HepG2 (cell line): ENCODE measurements at regions of chr17 and their contacts with region 1.

Region 1: GRCh38 chr17:43006639-43007551 is at the start of gene IFI35:
- DNase-seq: peak; percentile 83
- ATAC-seq: peak; percentile 78
- H3K4me3 ChIP-seq: peak within 1 kb of the TSS; percentile 71 to 92 (median 88)
- H3K27ac ChIP-seq: peak within 1 kb of the TSS; percentile 92
- H3K4me1 ChIP-seq: peaks cover 81% of the 10 kb centered on the region
- H3K27me3 ChIP-seq: no peaks in the 10 kb centered on the region; a peak in 1 of 5 replicates
- CTCF ChIP-seq: peak; percentile 97
- EP300 ChIP-seq: no peak
- POLR2A ChIP-seq: peak; percentile 75 to 76
- RAD21 ChIP-seq: peak; percentile 88
- total RNA-seq, gene IFI35: 38.1 and 40.2 TPM in 2 replicates

Region 2: DNA sequence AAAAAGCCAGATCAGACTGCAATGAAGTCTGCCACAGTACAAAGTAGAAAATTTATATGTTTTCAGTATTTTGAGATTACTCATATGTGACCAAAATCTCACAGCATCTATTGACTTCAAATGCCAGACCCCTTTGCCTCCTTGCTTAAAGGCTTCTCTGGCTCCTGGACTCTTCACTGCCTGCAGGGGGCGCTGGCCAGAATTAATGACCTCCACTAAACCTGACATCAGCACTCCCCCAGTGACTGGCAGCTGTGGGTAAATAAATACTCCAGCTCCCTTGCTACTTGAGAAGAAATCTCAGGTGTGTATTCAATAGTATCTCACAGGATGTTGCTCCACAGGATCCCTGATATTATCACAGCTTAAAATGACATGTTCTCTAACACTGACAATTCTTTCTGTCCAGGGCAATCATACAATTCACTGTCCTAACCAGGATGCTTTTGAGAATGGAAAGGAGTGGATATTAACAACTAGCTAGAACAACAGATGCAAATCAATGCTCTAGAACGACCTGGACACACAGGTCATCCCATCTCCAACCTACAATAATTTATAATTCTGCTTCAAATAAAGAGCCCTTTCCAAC is 186.9 kb before region 1 on chr17:
- CTCF ChIA-PET with region 1: no interaction called
- POLR2A ChIA-PET with region 1: no interaction called
- in situ Hi-C with region 1: no loop called
- intact Hi-C with region 1: no loop called
- DNase-seq: peak; percentile 88
- ATAC-seq: peak; percentile 67
- H3K4me3 ChIP-seq: no peak overlapping the region
- H3K27ac ChIP-seq: no peak overlapping the region
- H3K4me1 ChIP-seq: peaks cover 35% of the 10 kb centered on the region
- H3K27me3 ChIP-seq: peaks cover 0 to 7% of the 10 kb centered on the region in 2 experiments; a peak in 1 of 5 replicates
- CTCF ChIP-seq: peak; percentile 81
- EP300 ChIP-seq: no peak
- POLR2A ChIP-seq: no peak
- RAD21 ChIP-seq: peak; percentile 60

Region 3: DNA sequence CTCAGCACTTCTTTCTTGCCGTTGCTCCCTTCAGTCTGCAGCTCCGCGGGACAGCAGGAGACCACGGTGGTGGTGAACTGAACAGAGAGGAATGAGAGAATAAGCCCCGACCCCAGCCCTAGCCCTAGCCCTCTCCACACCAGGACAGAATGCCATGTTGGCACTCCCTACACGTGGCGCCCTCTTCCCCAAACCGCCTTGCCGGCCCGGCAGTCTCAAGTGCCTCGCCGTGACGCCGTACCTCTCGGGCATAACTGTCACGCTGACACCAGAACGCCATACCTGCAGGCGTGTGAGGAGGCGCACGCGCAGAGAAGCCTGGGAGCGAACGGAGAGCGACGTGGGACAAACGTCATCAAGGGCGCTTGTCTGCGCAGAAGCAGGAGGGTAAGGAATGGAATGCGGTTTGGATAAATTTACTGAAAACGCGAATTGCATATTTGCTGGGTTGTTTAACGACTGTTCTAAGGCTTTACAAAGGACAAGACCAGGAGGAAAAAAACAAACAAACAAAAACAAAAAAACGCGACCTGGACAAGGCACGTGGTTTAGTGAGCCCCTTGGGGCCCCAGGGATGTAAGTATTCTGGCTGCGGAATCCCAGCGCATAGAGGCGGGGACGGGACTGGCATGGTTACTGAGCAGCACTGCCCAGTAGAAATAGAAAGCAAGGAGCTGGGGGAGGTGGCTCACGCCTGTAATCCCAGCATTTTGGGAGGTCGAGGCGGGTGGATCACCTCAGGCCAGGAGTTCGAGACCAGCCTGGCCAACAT is 42.5 kb before region 1 on chr17 and contains the start of gene AARSD1:
- CTCF ChIA-PET with region 1: no interaction called
- POLR2A ChIA-PET with region 1: no interaction called
- in situ Hi-C with region 1: no loop called
- intact Hi-C with region 1: no loop called
- DNase-seq: peak; percentile 70
- ATAC-seq: peak; percentile 83
- H3K4me3 ChIP-seq: peak within 1 kb of the TSS; percentile 60 to 72 (median 63)
- H3K27ac ChIP-seq: peak within 1 kb of the TSS; percentile 44
- H3K4me1 ChIP-seq: peaks cover 19% of the 10 kb centered on the region
- H3K27me3 ChIP-seq: no peaks in the 10 kb centered on the region
- CTCF ChIP-seq: 0 out of 2 replicates have a peak, but pooled peaks have one; percentile 14
- EP300 ChIP-seq: no peak
- POLR2A ChIP-seq: peak; percentile 51 to 74
- RAD21 ChIP-seq: no peak
- total RNA-seq, gene AARSD1: 24.7 and 29.8 TPM in 2 replicates

Region 4: DNA sequence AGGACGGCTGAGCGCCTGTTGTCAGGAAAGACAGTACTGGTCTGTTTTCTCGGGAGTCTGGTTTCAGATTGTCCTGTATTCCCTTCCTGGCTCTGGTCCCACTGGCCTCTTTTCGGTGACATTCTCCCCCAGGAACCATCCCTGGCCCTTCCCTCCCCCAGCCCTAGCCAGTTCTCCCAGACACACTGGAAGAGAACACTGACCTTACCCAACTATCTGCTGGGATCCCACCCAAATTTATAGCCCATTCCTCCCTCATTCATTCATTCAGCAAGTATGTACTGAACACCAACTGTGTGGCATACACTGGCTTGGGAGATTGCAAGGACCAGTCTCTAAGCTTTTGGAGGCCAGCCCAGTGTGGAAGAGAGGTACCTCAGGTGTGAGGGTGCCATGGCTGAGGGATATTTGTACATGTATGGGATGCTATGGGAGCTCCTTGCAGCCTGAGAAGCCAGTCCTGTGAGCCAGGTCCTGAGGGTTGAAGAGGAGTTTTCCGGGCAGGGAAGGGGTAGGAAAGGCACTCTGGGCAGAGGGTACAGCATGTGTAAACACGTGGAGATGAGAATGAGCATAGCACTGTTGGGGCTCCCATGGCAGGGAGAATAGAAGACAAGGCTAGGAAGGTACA is 23.4 kb after region 1 on chr17:
- CTCF ChIA-PET with region 1: no interaction called
- POLR2A ChIA-PET with region 1: interaction called, 16 read pairs
- in situ Hi-C with region 1: no loop called
- intact Hi-C with region 1: no loop called
- DNase-seq: no peak
- ATAC-seq: no peak
- H3K4me3 ChIP-seq: peak overlapping the region in 1 of 3 experiments; percentile 56; a peak in 2 of 6 replicates
- H3K27ac ChIP-seq: no peak overlapping the region
- H3K4me1 ChIP-seq: peaks cover 50% of the 10 kb centered on the region
- H3K27me3 ChIP-seq: no peaks in the 10 kb centered on the region
- CTCF ChIP-seq: no peak
- EP300 ChIP-seq: no peak
- POLR2A ChIP-seq: no peak
- RAD21 ChIP-seq: no peak